H1 (cell line): ENCODE measurements at regions of chr4 and their contacts with region 1.

Region 1: GRCh38 chr4:122758033-122758432 is 25.5 kb downstream of the BBS12 start:
- DNase-seq: no peak
- H3K4me3 ChIP-seq: no peak overlapping the region
- H3K27ac ChIP-seq: no peak overlapping the region
- H3K4me1 ChIP-seq: peaks cover 0 to 3% (median under 1%) of the 10 kb centered on the region in 4 experiments; a peak in 2 of 7 replicates
- H3K27me3 ChIP-seq: peaks cover 0 to under 1% (median 0%) of the 10 kb centered on the region in 4 experiments; a peak in 1 of 7 replicates
- CTCF ChIP-seq: peak in 2 of 3 experiments; percentile 31 to 47; a peak in 2 of 4 replicates
- EP300 ChIP-seq: no peak
- POLR2A ChIP-seq: no peak
- RAD21 ChIP-seq: peak; percentile 75 to 77

Region 2: GRCh38 chr4:122700178-122700725 is 57.8 kb before region 1 on chr4:
- CTCF ChIA-PET with region 1: no interaction called
- POLR2A ChIA-PET with region 1: no interaction called
- DNase-seq: no peak
- H3K4me3 ChIP-seq: no peak overlapping the region
- H3K27ac ChIP-seq: no peak overlapping the region
- H3K4me1 ChIP-seq: no peaks in the 10 kb centered on the region
- H3K27me3 ChIP-seq: no peaks in the 10 kb centered on the region; a peak in 1 of 7 replicates
- CTCF ChIP-seq: no peak
- EP300 ChIP-seq: no peak
- POLR2A ChIP-seq: no peak
- RAD21 ChIP-seq: no peak

Region 3: DNA sequence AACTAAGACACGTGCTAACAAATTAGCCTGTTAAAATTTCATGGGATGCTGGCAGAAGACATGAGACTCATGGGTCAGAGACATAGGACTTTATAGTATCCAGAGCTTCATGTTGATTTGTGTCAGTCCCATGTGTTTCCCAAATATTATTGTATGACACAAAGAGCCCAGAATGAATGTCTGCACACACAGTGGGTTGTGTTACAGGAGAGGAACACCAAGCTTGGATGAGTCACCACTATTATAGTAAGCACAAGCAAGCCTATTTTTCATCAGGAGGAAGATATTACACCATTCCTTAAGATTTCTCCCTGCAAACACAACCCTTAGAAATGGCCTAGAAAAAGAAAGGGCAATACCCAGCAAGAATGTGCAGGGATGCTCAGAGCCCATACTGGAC is 10.2 kb before region 1 on chr4:
- CTCF ChIA-PET with region 1: interaction called, 15 read pairs
- POLR2A ChIA-PET with region 1: interaction called, 3 read pairs
- DNase-seq: no peak
- H3K4me3 ChIP-seq: no peak overlapping the region
- H3K27ac ChIP-seq: no peak overlapping the region
- H3K4me1 ChIP-seq: no peaks in the 10 kb centered on the region
- H3K27me3 ChIP-seq: no peaks in the 10 kb centered on the region
- CTCF ChIP-seq: no peak
- EP300 ChIP-seq: no peak
- POLR2A ChIP-seq: no peak
- RAD21 ChIP-seq: no peak

Region 4: DNA sequence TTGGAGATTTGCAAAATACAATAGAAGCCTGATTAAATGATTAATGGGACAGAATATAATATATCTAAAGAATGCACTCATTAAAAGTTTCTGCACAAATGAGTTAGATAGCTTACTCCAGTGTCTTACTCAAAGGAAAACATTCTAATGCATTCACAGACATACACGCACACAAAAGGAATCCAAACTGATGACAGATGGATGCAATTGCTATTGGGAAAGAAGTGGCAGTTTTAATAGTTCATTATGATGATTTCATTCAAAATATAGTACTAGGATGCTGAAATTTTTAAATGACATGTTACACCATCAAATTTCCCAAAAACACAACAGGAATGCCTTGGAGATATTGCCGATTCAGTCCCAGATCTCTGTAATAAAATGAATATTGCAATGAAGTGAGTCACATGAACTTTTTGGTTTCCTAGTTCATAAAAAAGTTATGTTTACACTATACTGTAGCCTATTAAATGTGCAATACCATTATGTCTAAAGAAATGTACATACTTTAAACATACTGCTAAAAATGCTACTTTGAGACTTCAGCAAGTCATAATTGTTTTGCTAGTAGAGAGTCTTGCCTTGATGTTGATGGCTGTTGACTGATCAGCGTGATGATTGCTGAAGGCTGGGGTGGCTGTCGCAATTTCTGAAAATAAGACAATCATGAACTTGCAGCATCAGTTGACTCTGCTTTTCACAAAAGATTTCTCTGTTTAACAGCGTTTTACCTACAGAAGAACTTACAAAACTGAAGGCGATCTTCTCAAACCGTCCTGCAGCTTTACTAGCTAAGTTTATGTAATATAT is 20.0 kb after region 1 on chr4:
- CTCF ChIA-PET with region 1: interaction called, 19 read pairs
- POLR2A ChIA-PET with region 1: interaction called, 4 read pairs
- DNase-seq: no peak
- H3K4me3 ChIP-seq: no peak overlapping the region
- H3K27ac ChIP-seq: no peak overlapping the region
- H3K4me1 ChIP-seq: peaks cover 0 to 16% (median 12%) of the 10 kb centered on the region in 4 experiments; a peak in 5 of 7 replicates
- H3K27me3 ChIP-seq: no peaks in the 10 kb centered on the region
- CTCF ChIP-seq: no peak
- EP300 ChIP-seq: no peak
- POLR2A ChIP-seq: no peak
- RAD21 ChIP-seq: no peak

Region 5: DNA sequence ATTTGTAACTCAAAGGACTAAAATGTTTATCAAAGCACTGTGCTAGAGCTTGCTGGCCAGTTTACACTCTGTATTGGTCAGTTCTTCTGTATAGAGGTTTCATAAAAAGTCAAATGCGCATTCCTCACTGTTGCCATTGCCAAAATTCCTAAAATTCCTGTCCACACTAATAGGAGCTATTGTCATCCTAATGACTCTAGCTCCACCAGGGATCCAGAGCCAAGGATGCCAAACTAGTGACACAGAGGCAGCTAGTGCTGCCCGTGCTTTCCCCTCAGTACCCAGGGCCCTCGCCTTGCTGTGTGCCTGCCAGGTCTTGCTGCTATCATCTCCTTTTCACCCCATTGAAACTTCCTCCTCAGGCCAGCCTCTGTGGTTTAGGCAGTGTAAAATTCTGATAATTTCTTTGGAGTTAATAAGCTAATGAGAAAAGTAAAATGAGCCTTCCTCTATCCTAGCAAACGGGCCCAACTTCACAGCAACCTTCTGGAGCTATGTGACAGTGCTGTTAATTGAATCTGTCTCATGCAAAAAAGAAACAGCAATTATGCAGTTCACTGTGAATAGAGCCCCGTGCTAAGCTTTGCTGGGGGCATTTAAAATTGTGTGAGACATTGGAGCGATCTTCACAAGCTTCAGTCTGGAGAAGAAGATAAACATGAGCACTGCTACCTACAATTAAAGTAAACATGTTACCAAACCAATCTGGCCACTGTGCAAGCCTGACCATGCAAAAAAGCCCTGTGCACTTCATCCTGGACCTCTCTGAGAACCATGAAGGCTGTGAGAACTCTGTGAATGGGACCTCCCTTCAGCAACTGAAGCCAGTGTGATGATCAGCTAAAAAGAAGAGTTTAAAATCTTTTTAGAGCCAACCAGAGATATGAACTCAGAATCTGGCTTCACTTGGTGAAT is 25.5 kb after region 1 on chr4:
- CTCF ChIA-PET with region 1: interaction called, 19 read pairs
- POLR2A ChIA-PET with region 1: interaction called, 4 read pairs
- DNase-seq: peak; percentile 72 to 95
- H3K4me3 ChIP-seq: peak overlapping the region in 1 of 4 experiments; percentile 16; a peak in 1 of 8 replicates
- H3K27ac ChIP-seq: peak overlapping the region; percentile 84
- H3K4me1 ChIP-seq: peaks cover 7 to 26% (median 16%) of the 10 kb centered on the region in 4 experiments
- H3K27me3 ChIP-seq: no peaks in the 10 kb centered on the region
- CTCF ChIP-seq: no peak
- EP300 ChIP-seq: no peak
- POLR2A ChIP-seq: peak; percentile 86 to 94
- RAD21 ChIP-seq: peak in 1 of 2 experiments; percentile 22; a peak in 1 of 4 replicates

Region 6: GRCh38 chr4:122854447-122855352 is 96.7 kb after region 1 on chr4:
- CTCF ChIA-PET with region 1: interaction called, 15 read pairs
- POLR2A ChIA-PET with region 1: interaction called, 7 read pairs
- DNase-seq: no peak
- H3K4me3 ChIP-seq: no peak overlapping the region
- H3K27ac ChIP-seq: no peak overlapping the region
- H3K4me1 ChIP-seq: peaks cover 6 to 46% (median 24%) of the 10 kb centered on the region in 4 experiments
- H3K27me3 ChIP-seq: no peaks in the 10 kb centered on the region
- CTCF ChIP-seq: no peak
- EP300 ChIP-seq: no peak
- POLR2A ChIP-seq: no peak
- RAD21 ChIP-seq: no peak